PC-9 (cell line): ENCODE measurements at regions of chr1 and their contacts with region 1.

Region 1: GRCh38 chr1:113647164-113647563 is 112.1 kb downstream of the PHTF1 start:
- DNase-seq: no peak
- H3K4me3 ChIP-seq: no peak overlapping the region
- H3K27ac ChIP-seq: no peak overlapping the region
- H3K4me1 ChIP-seq: no peaks in the 10 kb centered on the region
- H3K27me3 ChIP-seq: no peaks in the 10 kb centered on the region
- CTCF ChIP-seq: no peak

Region 2: GRCh38 chr1:113508364-113509164 is 138.6 kb before region 1 on chr1:
- CTCF ChIA-PET with region 1: no interaction called
- POLR2A ChIA-PET with region 1: interaction called, 11 read pairs
- intact Hi-C with region 1: no loop called
- DNase-seq: no peak
- H3K4me3 ChIP-seq: no peak overlapping the region
- H3K27ac ChIP-seq: no peak overlapping the region
- H3K4me1 ChIP-seq: no peaks in the 10 kb centered on the region
- H3K27me3 ChIP-seq: no peaks in the 10 kb centered on the region
- CTCF ChIP-seq: no peak

Region 3: DNA sequence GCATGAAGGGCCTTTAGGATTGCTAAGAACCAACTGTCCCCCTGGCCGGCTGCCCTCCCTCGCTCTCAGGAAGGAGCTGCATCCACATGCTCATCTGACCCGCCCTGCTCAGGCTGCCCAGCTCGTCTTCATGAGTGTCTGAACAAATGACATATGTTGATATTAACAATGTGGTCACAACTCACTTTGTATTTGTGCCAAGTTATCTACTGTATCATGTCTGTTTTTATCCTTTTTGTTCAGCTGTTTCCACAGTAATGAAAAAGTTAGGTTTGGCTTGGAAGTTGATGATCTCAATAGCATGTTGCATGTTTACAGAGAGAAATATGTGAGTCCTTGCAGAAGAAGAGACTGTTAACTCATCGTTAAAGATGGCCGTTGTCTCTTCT is 37.0 kb after region 1 on chr1:
- CTCF ChIA-PET with region 1: no interaction called
- POLR2A ChIA-PET with region 1: no interaction called
- intact Hi-C with region 1: no loop called
- DNase-seq: no peak
- H3K4me3 ChIP-seq: no peak overlapping the region
- H3K27ac ChIP-seq: no peak overlapping the region
- H3K4me1 ChIP-seq: no peaks in the 10 kb centered on the region
- H3K27me3 ChIP-seq: no peaks in the 10 kb centered on the region
- CTCF ChIP-seq: no peak